Activated CD4-positive, alpha-beta memory T cell treated with anti-CD3 and anti-CD28 coated beads for 36 hours (primary cell): ENCODE measurements at regions of chr4 and their contacts with region 1.

Region 1: DNA sequence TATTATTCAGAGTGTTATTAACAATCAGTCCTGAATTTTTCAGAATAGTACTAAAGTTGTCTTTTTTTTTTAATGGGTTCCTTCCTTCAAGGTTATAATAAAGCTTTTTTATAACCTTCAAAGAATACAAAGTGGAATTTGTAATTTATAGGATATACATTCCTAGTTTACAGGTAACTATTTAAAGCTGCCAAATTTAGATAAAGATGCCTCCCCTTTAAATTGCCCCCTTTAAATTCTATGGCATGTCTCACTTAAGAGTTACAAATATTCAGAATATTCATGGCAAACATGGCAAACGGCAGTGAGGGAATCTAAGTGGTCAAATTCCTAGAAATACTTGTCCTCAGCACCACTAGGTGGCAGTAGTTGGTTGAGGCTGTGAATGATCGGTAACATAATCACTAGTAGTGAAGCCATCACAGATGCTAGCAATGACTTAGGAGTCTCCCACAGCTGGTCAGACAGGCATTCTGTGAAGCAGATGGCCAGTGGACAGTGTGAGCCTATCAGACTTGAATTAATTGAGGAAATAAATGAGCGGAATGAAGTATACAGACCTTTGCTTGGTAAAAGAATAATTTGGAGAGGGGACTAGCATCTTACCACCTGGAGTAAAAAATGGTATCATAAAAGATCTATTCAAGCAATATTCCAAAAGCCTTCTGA is 86.4 kb downstream of the CBR4 start:
- DNase-seq: peak; percentile 52
- H3K4me3 Mint-ChIP-seq: no peak overlapping the region
- H3K27ac Mint-ChIP-seq: no peak overlapping the region
- H3K4me1 Mint-ChIP-seq: no peaks in the 10 kb centered on the region
- H3K27me3 Mint-ChIP-seq: no peaks in the 10 kb centered on the region

Region 2: DNA sequence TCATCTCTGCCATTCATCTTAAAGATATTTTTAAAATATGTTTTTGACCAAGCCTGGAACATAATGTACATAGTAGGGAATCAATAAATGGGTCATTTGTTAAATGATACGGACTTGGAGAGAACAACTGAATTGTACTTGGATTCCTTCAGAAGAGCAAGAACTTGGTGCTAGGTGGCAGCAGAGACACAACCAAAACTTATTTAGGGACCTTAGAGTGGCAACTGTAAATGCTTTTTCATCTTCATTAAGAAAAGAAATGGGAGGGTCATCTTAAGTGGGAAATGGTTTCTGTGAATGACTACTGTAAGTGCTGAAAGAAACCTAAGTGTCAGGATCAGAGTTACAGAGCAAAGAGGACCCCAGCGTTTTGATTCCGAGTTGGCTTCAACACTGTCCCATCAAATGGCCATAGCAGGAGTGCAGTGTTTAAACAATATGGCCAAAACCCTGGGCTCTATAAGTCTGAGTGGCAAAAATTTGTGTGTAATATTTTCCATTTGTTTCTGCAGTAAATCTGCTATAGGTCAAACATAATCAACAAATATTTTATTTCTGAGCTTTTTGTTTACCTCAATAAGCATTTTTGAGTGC is 213.2 kb before region 1 on chr4:
- CTCF ChIA-PET with region 1: interaction called, 11 read pairs
- POLR2A ChIA-PET with region 1: no interaction called
- intact Hi-C with region 1: no loop called
- DNase-seq: no peak
- H3K4me3 Mint-ChIP-seq: no peak overlapping the region
- H3K27ac Mint-ChIP-seq: no peak overlapping the region
- H3K4me1 Mint-ChIP-seq: peaks cover 7% of the 10 kb centered on the region
- H3K27me3 Mint-ChIP-seq: peaks cover 5% of the 10 kb centered on the region

Region 3: GRCh38 chr4:168907119-168907698 is 16.5 kb before region 1 on chr4:
- CTCF ChIA-PET with region 1: interaction called, 11 read pairs
- POLR2A ChIA-PET with region 1: no interaction called
- intact Hi-C with region 1: no loop called
- DNase-seq: no peak
- H3K4me3 Mint-ChIP-seq: no peak overlapping the region
- H3K27ac Mint-ChIP-seq: no peak overlapping the region
- H3K4me1 Mint-ChIP-seq: no peaks in the 10 kb centered on the region
- H3K27me3 Mint-ChIP-seq: no peaks in the 10 kb centered on the region

Region 4: GRCh38 chr4:169485791-169486742 is 562.4 kb after region 1 on chr4:
- CTCF ChIA-PET with region 1: interaction called, 13 read pairs
- POLR2A ChIA-PET with region 1: no interaction called
- intact Hi-C with region 1: loop called (anchors 1 kb)
- DNase-seq: peak; percentile 43
- H3K4me3 Mint-ChIP-seq: no peak overlapping the region
- H3K27ac Mint-ChIP-seq: no peak overlapping the region
- H3K4me1 Mint-ChIP-seq: peaks cover 2% of the 10 kb centered on the region
- H3K27me3 Mint-ChIP-seq: no peaks in the 10 kb centered on the region

Region 5: DNA sequence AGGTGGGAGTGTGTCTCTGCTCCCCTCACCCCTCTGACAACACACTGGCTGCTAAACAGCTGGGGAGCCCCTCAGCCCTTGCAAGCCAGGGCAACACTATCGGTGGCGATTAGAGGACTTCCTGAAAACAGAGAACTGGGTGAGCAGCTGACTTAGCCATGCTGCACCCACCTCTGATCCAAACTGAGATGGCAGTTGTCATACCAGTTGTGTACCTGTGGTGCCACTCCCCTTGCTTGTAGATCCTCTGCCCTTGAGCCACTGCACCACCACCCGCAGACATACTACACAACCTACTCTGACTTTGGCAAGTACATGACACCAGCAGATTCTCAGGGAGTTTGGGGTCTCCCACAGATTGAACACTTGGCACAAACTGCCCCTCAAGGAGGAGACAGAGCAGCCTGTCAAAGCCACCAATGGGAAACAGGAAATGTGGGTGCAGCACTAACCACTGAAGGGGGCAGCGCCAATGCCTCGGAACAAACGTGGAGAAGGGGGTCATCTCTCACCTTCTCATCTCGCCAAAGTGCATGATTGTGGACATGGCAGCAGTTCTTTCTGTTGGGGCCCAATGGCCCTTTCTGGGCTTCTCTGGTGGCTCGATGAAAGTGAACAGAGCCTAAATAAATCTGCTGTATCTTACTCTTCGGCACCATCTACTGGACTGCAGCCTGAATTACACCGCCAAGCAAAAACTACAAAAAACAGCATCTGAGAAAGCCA is 568.9 kb after region 1 on chr4:
- CTCF ChIA-PET with region 1: interaction called, 21 read pairs
- POLR2A ChIA-PET with region 1: no interaction called
- intact Hi-C with region 1: no loop called
- DNase-seq: peak; percentile 41
- H3K4me3 Mint-ChIP-seq: no peak overlapping the region
- H3K27ac Mint-ChIP-seq: no peak overlapping the region
- H3K4me1 Mint-ChIP-seq: peaks cover 2% of the 10 kb centered on the region
- H3K27me3 Mint-ChIP-seq: no peaks in the 10 kb centered on the region

Region 6: DNA sequence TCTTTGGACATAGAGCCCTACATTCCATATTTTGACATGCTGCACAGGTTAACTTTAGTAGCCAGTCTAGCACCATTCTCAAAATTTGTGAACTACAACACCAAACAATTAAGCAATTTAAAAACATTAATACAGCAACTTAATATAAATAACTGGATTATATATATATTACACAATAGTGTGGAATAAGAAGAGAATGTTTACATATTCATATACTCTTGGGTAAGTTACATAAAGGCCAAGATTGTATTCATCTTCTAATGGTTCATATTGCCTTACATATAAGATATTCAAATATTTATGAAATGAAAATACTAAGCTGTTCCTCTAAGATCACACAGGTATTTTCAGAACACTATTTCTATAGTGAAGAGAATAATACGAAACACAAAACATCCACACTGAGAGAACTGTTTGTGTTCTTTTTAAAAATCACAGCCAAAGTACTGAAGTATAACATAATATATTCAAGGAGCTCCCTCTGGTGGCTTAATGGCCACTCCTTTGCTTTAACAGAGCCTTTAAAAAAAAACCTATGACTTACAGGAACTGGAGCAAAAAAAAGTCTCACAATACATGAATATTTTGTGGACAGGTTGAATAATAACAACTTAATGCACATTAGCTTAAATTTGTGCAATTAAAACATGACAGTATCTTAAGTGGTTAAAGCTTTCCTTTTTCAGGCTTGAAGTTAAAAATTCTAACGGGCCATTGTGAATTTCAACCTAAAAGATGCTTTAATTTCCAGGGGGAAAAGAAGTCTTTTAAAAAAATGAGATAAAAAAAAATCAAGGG is 642.6 kb after region 1 on chr4:
- CTCF ChIA-PET with region 1: interaction called, 9 read pairs
- POLR2A ChIA-PET with region 1: no interaction called
- intact Hi-C with region 1: loop called (anchors 1 kb)
- DNase-seq: no peak
- H3K4me3 Mint-ChIP-seq: no peak overlapping the region
- H3K27ac Mint-ChIP-seq: no peak overlapping the region
- H3K4me1 Mint-ChIP-seq: peaks cover 5% of the 10 kb centered on the region
- H3K27me3 Mint-ChIP-seq: no peaks in the 10 kb centered on the region

Region 7: DNA sequence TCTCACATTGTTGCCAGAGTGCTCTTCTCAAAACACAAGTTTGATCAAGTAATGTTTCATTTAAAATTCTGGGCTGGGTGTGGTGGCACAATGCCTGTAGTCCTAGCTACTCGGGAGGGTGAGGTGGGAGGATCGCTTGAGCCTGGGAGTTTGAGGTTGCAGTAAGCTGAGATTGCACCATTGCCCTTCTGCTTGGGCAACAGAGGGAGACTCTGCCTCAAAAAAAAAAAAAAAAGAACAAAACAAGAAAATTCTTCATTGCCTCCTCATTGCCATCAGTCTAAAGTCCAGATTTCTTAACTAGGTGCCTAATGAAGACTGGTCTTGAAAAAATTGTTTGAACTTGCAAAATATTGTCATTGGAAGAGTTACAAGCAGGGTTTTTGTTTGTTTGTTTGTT is 982.4 kb after region 1 on chr4:
- CTCF ChIA-PET with region 1: no interaction called
- POLR2A ChIA-PET with region 1: no interaction called
- intact Hi-C with region 1: no loop called
- DNase-seq: no peak
- H3K4me3 Mint-ChIP-seq: no peak overlapping the region
- H3K27ac Mint-ChIP-seq: no peak overlapping the region
- H3K4me1 Mint-ChIP-seq: no peaks in the 10 kb centered on the region
- H3K27me3 Mint-ChIP-seq: peaks cover 10% of the 10 kb centered on the region

Region 8: DNA sequence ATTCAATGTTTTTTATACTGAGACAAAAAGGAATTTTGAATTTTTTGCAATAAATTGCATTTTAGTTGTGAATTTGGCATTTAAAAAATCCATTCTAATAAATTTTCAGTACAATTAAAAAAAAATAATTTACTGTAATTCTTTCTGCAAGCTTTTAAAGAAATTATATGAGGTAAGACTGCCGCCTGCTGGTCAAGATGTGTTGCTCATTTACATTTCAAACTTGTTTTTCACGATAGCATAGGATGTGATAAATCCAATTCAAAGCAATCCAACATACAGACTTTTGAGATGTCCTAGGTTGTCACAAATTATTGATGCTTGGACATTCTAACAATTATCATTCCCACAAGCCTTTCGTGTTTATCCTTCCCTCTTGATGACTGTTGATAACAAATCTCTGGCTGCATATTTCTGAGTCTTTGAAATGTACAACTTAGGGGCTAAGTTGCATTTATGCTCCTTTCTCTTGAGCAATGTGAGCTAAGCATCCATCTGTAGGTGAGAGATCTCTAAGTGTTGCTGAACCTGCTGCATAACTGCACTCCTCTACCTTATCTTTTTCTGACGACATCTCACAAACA is 1124.2 kb after region 1 on chr4:
- CTCF ChIA-PET with region 1: interaction called, 3 read pairs
- POLR2A ChIA-PET with region 1: no interaction called
- intact Hi-C with region 1: loop called (anchors 5 kb)
- DNase-seq: peak; percentile 57
- H3K4me3 Mint-ChIP-seq: no peak overlapping the region
- H3K27ac Mint-ChIP-seq: no peak overlapping the region
- H3K4me1 Mint-ChIP-seq: no peaks in the 10 kb centered on the region
- H3K27me3 Mint-ChIP-seq: peaks cover 2% of the 10 kb centered on the region